AG04449 (cell line): ENCODE measurements at regions of chr5 and their contacts with region 1.

Region 1: GRCh38 chr5:73792687-73793320 is 166.8 kb downstream of the ARHGEF28 start:
- DNase-seq: no peak
- H3K4me3 ChIP-seq: no peak overlapping the region
- CTCF ChIP-seq: peak; percentile 89

Region 2: DNA sequence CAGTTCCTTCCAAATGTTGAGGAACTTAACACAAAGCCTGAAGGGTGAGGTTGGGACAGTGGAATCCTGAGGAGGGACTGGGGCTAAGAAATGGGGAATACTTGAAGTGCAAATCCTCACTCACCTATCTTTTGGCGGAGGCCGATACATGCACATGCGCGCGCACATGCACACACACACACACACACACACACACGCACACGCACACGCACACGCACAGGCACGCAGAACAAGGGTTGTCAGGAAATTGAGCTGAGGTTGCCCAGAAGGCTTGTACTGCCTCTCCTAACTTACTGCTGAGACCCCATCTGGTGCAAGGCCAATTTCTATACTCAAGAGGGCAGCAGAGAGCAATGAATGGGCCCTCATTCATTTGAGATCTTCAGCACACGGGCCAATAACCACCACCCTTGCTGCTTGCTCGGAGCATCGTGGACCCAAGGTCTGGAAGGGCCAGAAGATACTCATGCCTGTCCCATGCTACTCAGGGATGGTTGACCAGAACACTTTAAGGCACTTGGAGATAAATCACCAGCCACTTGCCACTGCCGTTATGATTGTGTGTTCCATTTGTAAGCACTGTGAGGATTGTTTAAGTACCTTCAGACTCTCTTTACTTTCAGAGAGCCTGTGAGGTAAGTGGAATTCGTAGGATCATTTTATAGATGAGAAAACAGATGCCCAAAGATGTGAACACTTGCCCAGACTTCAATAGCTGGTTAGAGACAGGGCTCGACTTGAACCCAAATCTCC is 273.1 kb before region 1 on chr5:
- CTCF ChIA-PET with region 1: interaction called, 18 read pairs
- POLR2A ChIA-PET with region 1: no interaction called
- DNase-seq: no peak
- H3K4me3 ChIP-seq: no peak overlapping the region; the same call in 1 of the 2 replicates
- CTCF ChIP-seq: peak; percentile 87

Region 3: GRCh38 chr5:73582285-73583145 is 210.3 kb before region 1 on chr5:
- CTCF ChIA-PET with region 1: interaction called, 517 read pairs
- POLR2A ChIA-PET with region 1: no interaction called
- DNase-seq: no peak
- H3K4me3 ChIP-seq: no peak overlapping the region
- CTCF ChIP-seq: no peak

Region 4: GRCh38 chr5:73663860-73664240 is 129.0 kb before region 1 on chr5:
- CTCF ChIA-PET with region 1: no interaction called
- POLR2A ChIA-PET with region 1: no interaction called
- DNase-seq: no peak
- H3K4me3 ChIP-seq: no peak overlapping the region
- CTCF ChIP-seq: no peak

Region 5: DNA sequence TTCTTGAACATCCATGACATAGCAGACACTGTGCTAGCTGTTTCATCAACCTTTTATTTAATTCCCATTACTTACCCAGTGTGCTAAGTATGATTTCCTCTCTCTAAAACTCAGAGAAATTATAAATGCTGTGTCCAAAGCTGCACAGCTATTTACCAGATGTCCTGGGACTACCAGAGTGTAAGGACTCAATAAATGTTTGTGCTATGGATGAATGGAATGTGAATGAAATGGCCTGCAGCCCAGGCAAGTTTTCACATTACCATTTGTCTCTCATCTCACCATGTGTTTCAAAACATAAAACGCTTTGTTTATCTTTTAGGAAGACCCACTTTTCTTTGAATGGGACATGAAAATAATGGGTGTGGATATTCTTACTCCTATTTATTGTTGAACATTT is 70.6 kb before region 1 on chr5:
- CTCF ChIA-PET with region 1: no interaction called
- POLR2A ChIA-PET with region 1: no interaction called
- DNase-seq: no peak
- H3K4me3 ChIP-seq: no peak overlapping the region
- CTCF ChIP-seq: no peak

Region 6: GRCh38 chr5:73812962-73813588 is 20.3 kb after region 1 on chr5:
- CTCF ChIA-PET with region 1: interaction called, 51 read pairs
- POLR2A ChIA-PET with region 1: no interaction called
- DNase-seq: no peak
- H3K4me3 ChIP-seq: no peak overlapping the region
- CTCF ChIP-seq: no peak

Region 7: DNA sequence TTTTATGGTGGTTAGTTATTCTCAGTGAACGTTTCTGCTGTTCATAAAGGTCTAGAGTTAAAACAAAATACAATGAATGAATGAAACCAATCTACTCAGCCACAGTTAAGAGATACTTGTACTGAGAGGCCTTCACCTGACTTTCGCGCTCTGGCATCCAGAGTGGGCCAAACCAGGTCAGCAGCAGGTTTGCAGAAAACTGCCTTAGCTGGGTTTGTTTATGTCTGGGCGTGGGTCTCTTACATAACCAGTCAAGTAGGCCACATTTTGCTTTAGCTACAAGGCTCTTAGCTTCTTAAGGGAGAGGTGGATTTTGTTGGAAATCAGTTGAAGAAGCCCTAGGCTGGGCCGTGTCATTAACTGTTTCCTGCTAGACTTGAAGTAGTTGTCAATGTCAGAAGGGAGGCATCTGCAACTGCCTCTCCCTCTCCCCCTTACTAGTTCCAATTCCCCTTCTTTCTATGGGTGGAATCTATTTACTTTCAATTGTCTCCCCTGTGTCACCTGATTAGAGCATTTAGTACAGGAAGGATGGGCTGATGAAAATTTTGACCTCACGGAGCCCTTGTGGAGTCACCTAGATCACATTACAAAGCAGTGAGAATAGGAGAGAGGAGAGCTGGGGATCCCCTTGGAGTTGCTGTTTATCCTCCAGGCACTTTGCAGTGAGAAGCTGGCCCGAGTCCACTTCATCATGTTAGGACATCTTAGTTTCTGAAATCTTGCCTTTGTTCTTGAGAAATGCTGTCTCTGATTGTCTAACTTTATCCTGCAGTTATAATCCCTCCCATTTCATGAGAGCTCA is 33.7 kb after region 1 on chr5:
- CTCF ChIA-PET with region 1: interaction called, 14 read pairs
- POLR2A ChIA-PET with region 1: interaction called, 5 read pairs
- DNase-seq: peak; percentile 65
- H3K4me3 ChIP-seq: no peak overlapping the region
- CTCF ChIP-seq: no peak